ENCODE measurements at regions of chr14 and their contacts with region 1.

Region 1: GRCh38 chr14:35826218-35826951 is at the start of gene BRMS1L:
- DNase-seq: peak; percentile 97
- H3K4me3 Mint-ChIP-seq: peak within 1 kb of the TSS; percentile 78
- H3K27ac Mint-ChIP-seq: peak within 1 kb of the TSS; percentile 77
- H3K4me1 Mint-ChIP-seq: peaks cover 11% of the 10 kb centered on the region
- H3K27me3 Mint-ChIP-seq: no peaks in the 10 kb centered on the region
- CTCF ChIP-seq: no peak
- total RNA-seq, gene BRMS1L: 10.5 and 10.6 TPM in 2 replicates

Region 2: DNA sequence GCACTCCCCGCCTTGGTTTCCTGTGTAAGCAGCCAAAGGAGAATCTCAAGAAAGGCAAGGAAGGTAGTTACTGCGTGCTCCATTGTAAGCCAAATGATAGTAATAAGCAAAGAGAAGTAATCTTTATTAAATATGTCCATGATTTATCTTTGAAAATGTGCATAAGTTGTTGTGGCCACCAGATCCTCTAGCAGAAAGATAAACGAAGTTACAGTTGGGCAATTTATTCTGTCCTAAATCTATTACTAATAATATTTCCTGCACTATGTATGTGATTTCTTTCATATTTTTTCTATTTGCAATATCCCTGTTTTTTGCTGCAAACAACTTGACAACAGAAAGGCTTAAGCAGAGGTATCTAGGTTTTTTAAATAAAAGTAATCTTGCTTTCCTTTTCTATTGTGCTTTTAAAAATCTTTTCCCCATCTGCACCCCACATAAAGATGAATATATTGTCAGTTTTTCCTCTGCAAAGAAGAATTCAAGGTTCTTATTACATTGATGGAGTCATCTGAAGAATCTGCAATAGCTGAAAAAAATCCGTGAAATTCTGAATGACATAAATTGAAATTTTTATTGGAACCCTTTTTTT is 16.9 kb before region 1 on chr14:
- CTCF ChIA-PET with region 1: no interaction called
- intact Hi-C with region 1: loop called (anchors 1 kb)
- DNase-seq: no peak
- H3K4me3 Mint-ChIP-seq: peak overlapping the region; percentile 86
- H3K27ac Mint-ChIP-seq: peak overlapping the region; percentile 91
- H3K4me1 Mint-ChIP-seq: peaks cover 9% of the 10 kb centered on the region
- H3K27me3 Mint-ChIP-seq: no peaks in the 10 kb centered on the region
- CTCF ChIP-seq: no peak